Activated CD8-positive, alpha-beta T cell treated with anti-CD3 and anti-CD28 coated beads for 36 hours (primary cell): ENCODE measurements at regions of chr10 and their contacts with region 1.

Region 1: GRCh38 chr10:97072851-97073665 is 112.7 kb downstream of the SLIT1 start:
- DNase-seq: peak; percentile 94
- ATAC-seq: peak; percentile 82
- H3K4me3 Mint-ChIP-seq: no peak overlapping the region
- H3K27ac Mint-ChIP-seq: no peak overlapping the region
- H3K4me1 Mint-ChIP-seq: peaks cover 10% of the 10 kb centered on the region
- H3K27me3 Mint-ChIP-seq: peaks cover 22% of the 10 kb centered on the region
- CTCF ChIP-seq: peak; percentile 87

Region 2: DNA sequence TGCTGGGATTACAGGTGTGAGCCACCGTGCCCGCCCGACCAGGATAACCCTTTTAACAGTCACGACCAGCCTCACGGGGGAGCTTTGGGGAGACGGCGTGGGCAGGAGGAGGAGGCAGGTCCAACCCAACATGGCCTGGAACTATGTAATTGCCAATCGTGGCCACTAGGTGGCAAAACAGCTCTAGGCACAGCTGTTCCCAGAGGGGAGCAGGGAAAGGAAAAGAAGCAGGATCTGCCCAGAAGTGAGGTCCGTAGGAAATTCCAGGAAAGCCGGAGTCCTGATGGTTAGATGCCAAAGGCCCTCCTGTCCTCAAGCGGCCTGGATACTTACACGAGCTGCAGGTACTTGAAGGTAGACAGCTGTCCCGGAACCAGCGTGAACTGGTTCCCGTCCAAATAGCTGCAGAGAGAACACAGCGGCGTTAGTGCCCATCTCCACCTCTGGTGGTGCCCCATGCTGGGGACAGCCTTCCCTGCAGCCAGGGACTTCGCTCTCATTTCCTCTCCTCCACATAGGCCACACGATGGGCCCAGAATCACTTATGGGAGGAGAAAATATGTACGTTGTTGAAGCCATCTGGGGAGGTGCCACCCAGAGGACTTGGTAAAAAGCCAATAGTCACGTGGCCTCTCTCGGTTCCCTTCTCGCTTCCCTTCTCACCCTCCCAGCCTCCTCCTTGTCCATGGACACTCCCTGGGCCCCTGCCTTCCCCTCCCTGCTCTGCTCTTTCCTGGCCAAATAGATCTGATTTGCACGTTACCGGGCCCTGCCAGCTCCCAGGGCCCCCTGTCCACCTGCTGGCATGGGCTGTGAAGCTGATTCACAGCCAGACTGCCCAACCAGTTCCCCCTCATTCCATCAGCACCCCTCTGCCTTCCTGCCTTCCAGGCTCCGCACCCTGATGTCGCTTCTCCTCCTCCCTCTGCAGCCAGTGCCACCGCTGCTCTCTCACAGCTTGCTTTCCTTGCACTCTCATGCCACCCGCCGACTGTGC is 35.4 kb before region 1 on chr10:
- CTCF ChIA-PET with region 1: interaction called, 37 read pairs
- POLR2A ChIA-PET with region 1: no interaction called
- intact Hi-C with region 1: no loop called
- DNase-seq: peak; percentile 85
- ATAC-seq: peak; percentile 98
- H3K4me3 Mint-ChIP-seq: peak overlapping the region; percentile 46
- H3K27ac Mint-ChIP-seq: no peak overlapping the region
- H3K4me1 Mint-ChIP-seq: peaks cover 9% of the 10 kb centered on the region
- H3K27me3 Mint-ChIP-seq: peaks cover 8% of the 10 kb centered on the region
- CTCF ChIP-seq: peak; percentile 97

Region 3: GRCh38 chr10:97089209-97089870 is 16.3 kb after region 1 on chr10:
- CTCF ChIA-PET with region 1: interaction called, 48 read pairs
- POLR2A ChIA-PET with region 1: no interaction called
- intact Hi-C with region 1: no loop called
- DNase-seq: no peak
- ATAC-seq: no peak
- H3K4me3 Mint-ChIP-seq: no peak overlapping the region
- H3K27ac Mint-ChIP-seq: no peak overlapping the region
- H3K4me1 Mint-ChIP-seq: no peaks in the 10 kb centered on the region
- H3K27me3 Mint-ChIP-seq: peaks cover 29% of the 10 kb centered on the region
- CTCF ChIP-seq: no peak

Region 4: DNA sequence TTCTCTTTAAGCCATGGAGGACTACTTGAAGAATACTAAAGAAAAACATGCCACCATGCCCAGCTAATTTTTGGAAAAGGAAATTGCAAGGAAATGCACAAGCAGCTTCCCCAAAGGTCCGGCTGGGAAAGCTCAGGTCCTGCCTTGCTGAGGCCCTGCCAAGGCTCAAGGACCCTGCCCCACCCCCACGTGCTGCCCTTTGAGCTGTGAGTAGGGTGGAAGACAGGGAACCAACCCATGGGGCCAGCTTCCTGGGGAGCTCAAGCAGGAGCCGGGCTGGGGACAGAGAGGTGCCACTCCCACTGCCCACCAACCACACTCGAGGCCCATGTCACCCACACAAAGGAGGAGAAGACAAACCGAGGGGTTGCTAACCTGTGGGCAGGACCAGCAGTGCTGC is 34.5 kb after region 1 on chr10:
- CTCF ChIA-PET with region 1: interaction called, 20 read pairs
- POLR2A ChIA-PET with region 1: no interaction called
- intact Hi-C with region 1: no loop called
- DNase-seq: no peak
- ATAC-seq: no peak
- H3K4me3 Mint-ChIP-seq: no peak overlapping the region
- H3K27ac Mint-ChIP-seq: no peak overlapping the region
- H3K4me1 Mint-ChIP-seq: peaks cover 2% of the 10 kb centered on the region
- H3K27me3 Mint-ChIP-seq: peaks cover 10% of the 10 kb centered on the region
- CTCF ChIP-seq: no peak

Region 5: GRCh38 chr10:97196223-97197029 is 123.4 kb after region 1 on chr10:
- CTCF ChIA-PET with region 1: interaction called, 407 read pairs
- POLR2A ChIA-PET with region 1: no interaction called
- intact Hi-C with region 1: no loop called
- DNase-seq: peak; percentile 81
- ATAC-seq: peak; percentile 91
- H3K4me3 Mint-ChIP-seq: peak overlapping the region; percentile 70
- H3K27ac Mint-ChIP-seq: no peak overlapping the region
- H3K4me1 Mint-ChIP-seq: peaks cover 13% of the 10 kb centered on the region
- H3K27me3 Mint-ChIP-seq: peaks cover 24% of the 10 kb centered on the region
- CTCF ChIP-seq: peak; percentile 84

Region 6: DNA sequence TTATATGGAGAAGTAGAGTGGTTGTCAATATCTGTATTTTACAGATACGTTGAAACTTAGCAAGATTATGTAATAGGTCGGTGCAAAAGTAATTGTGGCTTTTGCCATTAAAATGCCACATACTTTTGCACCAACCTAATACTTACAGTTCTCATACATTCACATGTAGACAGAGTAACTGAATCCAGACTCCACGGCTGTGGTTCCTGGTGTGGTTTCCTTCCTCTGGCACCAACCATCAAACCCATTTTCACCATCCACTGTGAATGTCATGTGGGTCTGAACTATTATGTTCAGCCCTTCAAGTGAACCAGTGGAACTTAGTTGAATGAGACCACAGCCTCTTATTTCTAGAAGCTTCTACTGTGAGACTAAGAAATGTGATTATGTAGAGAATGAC is 144.2 kb after region 1 on chr10:
- CTCF ChIA-PET with region 1: interaction called, 407 read pairs
- POLR2A ChIA-PET with region 1: no interaction called
- intact Hi-C with region 1: no loop called
- DNase-seq: no peak
- ATAC-seq: no peak
- H3K4me3 Mint-ChIP-seq: no peak overlapping the region
- H3K27ac Mint-ChIP-seq: peak overlapping the region; percentile 94
- H3K4me1 Mint-ChIP-seq: peaks cover 29% of the 10 kb centered on the region
- H3K27me3 Mint-ChIP-seq: no peaks in the 10 kb centered on the region
- CTCF ChIP-seq: no peak

Region 7: GRCh38 chr10:97234400-97234799 is 161.3 kb after region 1 on chr10:
- CTCF ChIA-PET with region 1: interaction called, 93 read pairs
- POLR2A ChIA-PET with region 1: no interaction called
- intact Hi-C with region 1: no loop called
- DNase-seq: no peak
- ATAC-seq: peak; percentile 53
- H3K4me3 Mint-ChIP-seq: no peak overlapping the region
- H3K27ac Mint-ChIP-seq: no peak overlapping the region
- H3K4me1 Mint-ChIP-seq: peaks cover 7% of the 10 kb centered on the region
- H3K27me3 Mint-ChIP-seq: no peaks in the 10 kb centered on the region
- CTCF ChIP-seq: peak; percentile 74